ENCODE measurements at regions of chr7 and their contacts with region 1.

Region 1: GRCh38 chr7:156764016-156764669 is 123.6 kb downstream of the RNF32 start:
- DNase-seq: peak; percentile 73 to 78
- H3K4me3 ChIP-seq: no peak overlapping the region
- H3K4me3 Mint-ChIP-seq: no peak overlapping the region
- H3K27ac Mint-ChIP-seq: no peak overlapping the region
- H3K4me1 ChIP-seq: peaks cover 20% of the 10 kb centered on the region
- H3K4me1 Mint-ChIP-seq: peaks cover 30% of the 10 kb centered on the region
- H3K27me3 ChIP-seq: no peaks in the 10 kb centered on the region
- H3K27me3 Mint-ChIP-seq: no peaks in the 10 kb centered on the region
- CTCF ChIP-seq: peak; percentile 68 to 79

Region 2: GRCh38 chr7:155815332-155816191 is 948.6 kb before region 1 on chr7:
- CTCF ChIA-PET with region 1: no interaction called
- POLR2A ChIA-PET with region 1: no interaction called
- intact Hi-C with region 1: loop called (anchors 5 kb)
- DNase-seq: peak; percentile 76 to 89
- H3K4me3 ChIP-seq: no peak overlapping the region
- H3K4me3 Mint-ChIP-seq: peak overlapping the region; percentile 16
- H3K27ac Mint-ChIP-seq: no peak overlapping the region
- H3K4me1 ChIP-seq: peaks cover 13% of the 10 kb centered on the region; the same call in 1 of the 2 replicates
- H3K4me1 Mint-ChIP-seq: peaks cover 21% of the 10 kb centered on the region
- H3K27me3 ChIP-seq: peaks cover 3% of the 10 kb centered on the region
- H3K27me3 Mint-ChIP-seq: peaks cover 19% of the 10 kb centered on the region
- CTCF ChIP-seq: peak; percentile 86 to 97

Region 3: GRCh38 chr7:156560075-156560474 is 204.1 kb before region 1 on chr7:
- CTCF ChIA-PET with region 1: no interaction called
- POLR2A ChIA-PET with region 1: no interaction called
- intact Hi-C with region 1: loop called (anchors 10 kb)
- DNase-seq: peak; percentile 40 to 44
- H3K4me3 ChIP-seq: no peak overlapping the region
- H3K4me3 Mint-ChIP-seq: no peak overlapping the region
- H3K27ac Mint-ChIP-seq: no peak overlapping the region
- H3K4me1 ChIP-seq: no peaks in the 10 kb centered on the region
- H3K4me1 Mint-ChIP-seq: no peaks in the 10 kb centered on the region
- H3K27me3 ChIP-seq: no peaks in the 10 kb centered on the region
- H3K27me3 Mint-ChIP-seq: no peaks in the 10 kb centered on the region
- CTCF ChIP-seq: peak; percentile 52 to 59

Region 4: GRCh38 chr7:156668181-156668624 is 95.9 kb before region 1 on chr7:
- CTCF ChIA-PET with region 1: interaction called, 3 read pairs
- POLR2A ChIA-PET with region 1: no interaction called
- intact Hi-C with region 1: loop called (anchors 1 kb)
- DNase-seq: peak; percentile 59 to 78
- H3K4me3 ChIP-seq: no peak overlapping the region
- H3K4me3 Mint-ChIP-seq: peak overlapping the region; percentile 45
- H3K27ac Mint-ChIP-seq: peak overlapping the region; percentile 88
- H3K4me1 ChIP-seq: peaks cover 55% of the 10 kb centered on the region
- H3K4me1 Mint-ChIP-seq: peaks cover 47% of the 10 kb centered on the region
- H3K27me3 ChIP-seq: no peaks in the 10 kb centered on the region
- H3K27me3 Mint-ChIP-seq: no peaks in the 10 kb centered on the region
- CTCF ChIP-seq: no peak

Measured in Caco-2 (cell line).